Activated B cell treated with CpG ODN at 0.5 μM for 24 hours (primary cell): ENCODE measurements at regions of chr13 and their contacts with region 1.

Region 1: DNA sequence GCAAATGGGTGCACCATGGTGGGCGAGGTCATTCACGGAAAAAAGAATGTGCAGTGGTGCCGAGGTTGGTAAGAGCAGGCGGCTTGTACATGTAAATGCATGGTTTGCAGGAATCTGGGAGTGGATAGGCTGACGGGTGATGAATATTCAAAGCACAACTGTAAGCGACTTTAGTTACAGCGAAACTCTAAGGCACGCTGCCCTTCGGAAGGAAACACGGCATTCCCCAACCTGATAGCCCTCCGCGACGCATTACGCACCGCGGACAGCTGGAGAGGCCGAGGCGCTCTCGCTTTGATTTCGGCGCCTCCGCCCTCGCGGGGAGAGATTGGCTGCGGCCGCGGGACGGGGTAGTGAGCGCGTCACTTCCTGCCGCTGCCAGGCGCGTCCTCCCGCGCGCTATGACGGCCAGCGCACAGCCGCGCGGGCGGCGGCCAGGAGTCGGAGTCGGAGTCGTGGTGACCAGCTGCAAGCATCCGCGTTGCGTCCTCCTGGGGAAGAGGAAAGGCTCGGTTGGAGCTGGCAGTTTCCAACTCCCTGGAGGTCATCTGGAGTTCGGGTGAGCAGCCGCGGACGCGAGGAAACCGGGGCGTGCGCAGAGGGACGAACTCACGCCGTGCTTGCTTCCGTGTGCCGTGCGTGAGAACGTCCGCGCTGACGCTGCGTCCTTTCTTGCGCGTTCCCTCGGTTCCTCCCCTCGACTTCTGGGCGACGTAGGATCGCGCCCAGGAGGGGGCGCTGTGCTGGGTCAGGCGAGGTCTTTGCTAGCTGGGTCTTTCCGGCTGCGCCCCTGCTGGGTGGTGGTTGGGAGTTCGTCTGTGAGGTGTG is at the start of gene NUDT15:
- DNase-seq: peak; percentile 92
- ATAC-seq: peak; percentile 94
- H3K4me3 Mint-ChIP-seq: peak within 1 kb of the TSS; percentile 93
- H3K27ac Mint-ChIP-seq: peak within 1 kb of the TSS; percentile 96
- H3K4me1 Mint-ChIP-seq: peaks cover 29% of the 10 kb centered on the region
- H3K27me3 Mint-ChIP-seq: no peaks in the 10 kb centered on the region
- CTCF ChIP-seq: peak; percentile 83
- total RNA-seq, gene NUDT15: 5.5 and 6.2 TPM in 2 replicates

Region 2: GRCh38 chr13:46796515-46797474 is 1240.8 kb before region 1 on chr13 and contains the start of gene ESD:
- CTCF ChIA-PET with region 1: no interaction called
- POLR2A ChIA-PET with region 1: interaction called, 3 read pairs
- intact Hi-C with region 1: loop called (anchors 5 kb)
- DNase-seq: peak; percentile 86
- ATAC-seq: peak; percentile 95
- H3K4me3 Mint-ChIP-seq: peak within 1 kb of the TSS; percentile 97
- H3K27ac Mint-ChIP-seq: peak within 1 kb of the TSS; percentile 96
- H3K4me1 Mint-ChIP-seq: peaks cover 38% of the 10 kb centered on the region
- H3K27me3 Mint-ChIP-seq: no peaks in the 10 kb centered on the region
- CTCF ChIP-seq: no peak
- total RNA-seq, gene ESD: 73.5 and 74.2 TPM in 2 replicates

Region 3: GRCh38 chr13:48000778-48001628 is 36.6 kb before region 1 on chr13 and contains the start of gene SUCLA2:
- CTCF ChIA-PET with region 1: interaction called, 4 read pairs
- POLR2A ChIA-PET with region 1: interaction called, 10 read pairs
- intact Hi-C with region 1: loop called (anchors 1 kb)
- DNase-seq: peak; percentile 88
- ATAC-seq: peak; percentile 100
- H3K4me3 Mint-ChIP-seq: peak within 1 kb of the TSS; percentile 95
- H3K27ac Mint-ChIP-seq: peak within 1 kb of the TSS; percentile 74
- H3K4me1 Mint-ChIP-seq: peaks cover 28% of the 10 kb centered on the region
- H3K27me3 Mint-ChIP-seq: no peaks in the 10 kb centered on the region
- CTCF ChIP-seq: no peak
- total RNA-seq, gene SUCLA2: 32.1 and 35.8 TPM in 2 replicates

Region 4: DNA sequence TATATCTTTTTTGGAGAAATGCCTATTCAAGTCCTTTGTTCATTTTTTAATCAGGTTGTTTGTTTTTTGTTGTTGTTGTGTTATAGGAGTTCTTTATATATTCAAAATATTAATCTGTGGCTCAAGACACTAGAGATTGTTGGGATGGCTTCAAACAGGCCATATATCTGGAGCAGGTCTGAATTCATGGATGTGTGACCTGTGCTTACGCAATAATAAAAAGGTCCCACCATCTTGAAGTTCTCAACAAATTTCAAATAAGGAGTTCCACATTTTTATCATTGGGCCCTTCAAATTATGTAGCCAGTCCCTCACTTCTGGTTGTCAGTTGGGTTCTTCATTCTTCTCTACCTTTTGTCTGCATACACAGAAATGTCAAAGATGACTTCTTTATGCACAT is 17.8 kb before region 1 on chr13:
- CTCF ChIA-PET with region 1: no interaction called
- POLR2A ChIA-PET with region 1: no interaction called
- intact Hi-C with region 1: no loop called
- DNase-seq: no peak
- ATAC-seq: no peak
- H3K4me3 Mint-ChIP-seq: no peak overlapping the region
- H3K27ac Mint-ChIP-seq: no peak overlapping the region
- H3K4me1 Mint-ChIP-seq: no peaks in the 10 kb centered on the region
- H3K27me3 Mint-ChIP-seq: no peaks in the 10 kb centered on the region
- CTCF ChIP-seq: no peak

Region 5: DNA sequence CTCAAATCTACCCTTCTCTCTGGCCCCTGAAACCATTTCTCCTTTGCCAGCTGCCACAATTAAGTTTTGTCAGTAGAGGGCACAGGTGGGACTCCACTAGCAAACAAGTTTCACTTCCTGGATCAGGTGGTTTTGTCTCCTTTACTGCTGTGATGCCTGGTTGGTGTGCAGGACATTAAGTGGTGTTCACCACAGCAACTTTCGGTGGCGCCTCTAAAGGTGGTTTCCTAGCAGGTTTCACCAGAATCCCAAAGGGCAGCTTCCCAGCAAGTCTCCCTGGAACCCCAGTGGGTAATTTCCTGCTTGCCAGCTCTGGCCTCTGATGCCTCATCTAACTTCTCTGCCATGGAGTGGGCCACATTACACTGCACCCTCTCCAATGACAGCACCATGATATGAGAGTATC is 40.7 kb after region 1 on chr13:
- CTCF ChIA-PET with region 1: interaction called, 4 read pairs
- POLR2A ChIA-PET with region 1: interaction called, 9 read pairs
- intact Hi-C with region 1: loop called (anchors 5 kb)
- DNase-seq: peak; percentile 24
- ATAC-seq: peak; percentile 100
- H3K4me3 Mint-ChIP-seq: no peak overlapping the region
- H3K27ac Mint-ChIP-seq: peak overlapping the region; percentile 61
- H3K4me1 Mint-ChIP-seq: peaks cover 10% of the 10 kb centered on the region
- H3K27me3 Mint-ChIP-seq: no peaks in the 10 kb centered on the region
- CTCF ChIP-seq: no peak

Region 6: GRCh38 chr13:48094781-48095502 is 57.4 kb after region 1 on chr13 and contains the start of gene MED4:
- CTCF ChIA-PET with region 1: interaction called, 14 read pairs
- POLR2A ChIA-PET with region 1: interaction called, 12 read pairs
- intact Hi-C with region 1: loop called (anchors 1 kb)
- DNase-seq: peak; percentile 99
- ATAC-seq: peak; percentile 99
- H3K4me3 Mint-ChIP-seq: peak within 1 kb of the TSS; percentile 96
- H3K27ac Mint-ChIP-seq: peak within 1 kb of the TSS; percentile 90
- H3K4me1 Mint-ChIP-seq: peaks cover 34% of the 10 kb centered on the region
- H3K27me3 Mint-ChIP-seq: peaks cover 5% of the 10 kb centered on the region
- CTCF ChIP-seq: peak; percentile 84
- total RNA-seq, gene MED4: 50.4 and 51.9 TPM in 2 replicates

Region 7: DNA sequence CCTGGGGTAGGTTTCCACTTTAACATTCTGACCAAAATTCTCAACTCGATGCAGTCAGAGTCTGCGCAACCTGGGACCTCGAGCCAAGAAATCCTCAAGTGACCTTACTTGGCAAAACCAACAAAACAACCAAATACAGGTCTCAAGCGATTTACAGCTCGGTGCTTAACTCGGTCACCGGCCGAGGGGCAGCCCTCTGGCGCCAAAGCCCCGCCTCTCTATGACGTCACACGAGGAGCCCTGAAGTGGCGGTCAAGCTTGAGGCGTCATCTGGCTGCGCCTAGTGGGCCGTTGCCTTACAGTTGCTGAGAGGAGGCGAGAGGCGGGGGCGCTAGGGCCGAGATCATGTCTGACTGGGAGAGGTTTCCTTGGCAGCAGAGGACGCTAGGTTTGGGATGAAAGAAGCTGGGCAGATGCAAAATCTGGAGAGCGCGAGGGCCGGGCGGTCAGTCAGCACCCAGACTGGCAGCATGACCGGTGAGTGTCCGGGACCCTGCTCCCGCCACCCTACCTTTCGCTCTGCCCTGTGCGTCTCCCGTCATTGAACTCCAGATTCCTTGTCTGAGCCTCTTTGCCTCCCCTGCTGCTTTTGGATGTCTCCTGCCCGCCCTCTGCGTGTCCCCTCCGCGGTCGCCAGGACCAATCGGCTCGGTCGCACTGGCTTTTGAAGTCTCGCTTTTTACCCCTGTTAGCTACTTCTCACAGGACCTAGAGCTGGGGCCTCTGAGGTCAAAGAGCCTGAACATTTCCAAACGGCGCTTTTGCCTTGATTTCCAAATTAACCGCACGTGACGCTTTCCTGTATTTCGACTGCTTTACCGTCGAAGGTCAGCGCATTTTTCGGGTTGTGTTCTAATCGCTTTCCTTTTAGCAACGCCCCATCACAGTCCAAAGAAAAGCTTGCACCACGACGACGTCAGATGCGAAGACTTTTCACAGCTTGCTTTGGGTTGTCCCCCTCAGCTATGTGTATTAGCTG is 1210.4 kb after region 1 on chr13 and contains the start of gene CDADC1:
- CTCF ChIA-PET with region 1: no interaction called
- POLR2A ChIA-PET with region 1: no interaction called
- intact Hi-C with region 1: no loop called
- DNase-seq: peak; percentile 89
- ATAC-seq: peak; percentile 95
- H3K4me3 Mint-ChIP-seq: peak within 1 kb of the TSS; percentile 99
- H3K27ac Mint-ChIP-seq: peak within 1 kb of the TSS; percentile 94
- H3K4me1 Mint-ChIP-seq: peaks cover 22% of the 10 kb centered on the region
- H3K27me3 Mint-ChIP-seq: no peaks in the 10 kb centered on the region
- CTCF ChIP-seq: no peak
- total RNA-seq, gene CDADC1: 7.4 and 10.4 TPM in 2 replicates